Mucosa of descending colon (tissue), 3 donors: ENCODE measurements at regions of chr10 and their contacts with region 1.

Region 1: DNA sequence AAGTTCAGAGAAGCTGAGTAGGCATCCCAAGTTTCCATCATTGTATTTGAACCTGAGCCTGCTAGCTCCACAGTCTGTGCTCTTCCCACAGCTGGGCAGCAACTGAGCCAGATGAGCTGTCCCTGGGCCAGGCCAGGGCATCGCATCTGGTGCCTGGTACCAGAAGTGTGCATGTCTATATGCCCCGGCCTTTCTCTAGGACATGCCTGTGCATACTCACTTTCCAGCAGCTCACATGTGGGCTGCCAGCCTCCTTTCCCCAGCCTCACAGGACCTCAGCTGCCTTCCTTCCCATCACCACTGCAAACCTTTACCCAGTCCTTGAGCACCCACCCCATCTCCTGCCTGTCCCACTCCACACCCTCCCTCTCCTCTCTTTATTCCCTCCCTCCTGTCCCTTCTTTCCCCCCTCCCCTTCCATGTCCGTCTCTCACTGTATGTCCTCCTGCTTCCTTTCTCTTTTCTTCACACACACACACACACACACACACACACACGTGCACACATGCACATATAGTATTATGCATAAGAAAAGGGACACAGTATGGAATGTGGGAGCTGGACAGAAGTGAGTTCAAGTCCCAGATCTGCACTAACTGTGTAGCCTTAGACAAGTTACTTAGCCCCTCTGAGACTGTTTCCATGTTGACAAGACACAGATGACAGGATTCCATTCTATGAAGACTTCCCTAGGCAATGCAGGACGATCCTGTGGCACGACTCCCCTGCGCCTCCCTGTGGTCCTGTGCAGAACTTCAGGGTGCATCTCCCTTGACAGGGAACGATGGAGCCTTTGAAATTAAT is 10.9 kb downstream of the CDHR1 start:
- DNase-seq: peak; percentile 73 to 88 (median 86)
- ATAC-seq: peak; percentile 70
- H3K4me3 ChIP-seq: no peak overlapping the region
- H3K4me1 ChIP-seq: peaks cover 14% of the 10 kb centered on the region
- CTCF ChIP-seq: peak; percentile 62

Region 2: DNA sequence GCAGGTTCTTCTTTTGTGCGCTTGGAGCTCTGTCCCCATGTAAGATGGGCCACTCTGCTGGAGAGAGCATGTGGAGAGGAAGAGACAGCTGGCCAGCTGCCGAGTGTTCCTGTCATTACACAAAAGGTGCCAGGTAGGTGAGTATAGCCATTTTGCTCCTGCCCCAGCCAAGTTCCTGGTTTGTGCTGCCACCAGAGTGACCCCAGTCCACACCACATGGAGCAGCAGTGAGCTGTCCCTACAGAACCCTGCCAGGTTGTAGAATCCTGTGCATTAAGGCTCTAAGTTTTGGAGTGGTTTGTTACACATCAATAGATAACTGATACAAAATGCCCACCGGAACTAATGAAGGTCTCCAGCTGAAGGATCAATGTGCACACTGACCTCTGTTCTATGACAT is 150.5 kb before region 1 on chr10:
- intact Hi-C with region 1: no loop called
- DNase-seq: no peak
- ATAC-seq: peak; percentile 44
- H3K4me3 ChIP-seq: no peak overlapping the region
- H3K4me1 ChIP-seq: no peaks in the 10 kb centered on the region
- CTCF ChIP-seq: no peak

Region 3: DNA sequence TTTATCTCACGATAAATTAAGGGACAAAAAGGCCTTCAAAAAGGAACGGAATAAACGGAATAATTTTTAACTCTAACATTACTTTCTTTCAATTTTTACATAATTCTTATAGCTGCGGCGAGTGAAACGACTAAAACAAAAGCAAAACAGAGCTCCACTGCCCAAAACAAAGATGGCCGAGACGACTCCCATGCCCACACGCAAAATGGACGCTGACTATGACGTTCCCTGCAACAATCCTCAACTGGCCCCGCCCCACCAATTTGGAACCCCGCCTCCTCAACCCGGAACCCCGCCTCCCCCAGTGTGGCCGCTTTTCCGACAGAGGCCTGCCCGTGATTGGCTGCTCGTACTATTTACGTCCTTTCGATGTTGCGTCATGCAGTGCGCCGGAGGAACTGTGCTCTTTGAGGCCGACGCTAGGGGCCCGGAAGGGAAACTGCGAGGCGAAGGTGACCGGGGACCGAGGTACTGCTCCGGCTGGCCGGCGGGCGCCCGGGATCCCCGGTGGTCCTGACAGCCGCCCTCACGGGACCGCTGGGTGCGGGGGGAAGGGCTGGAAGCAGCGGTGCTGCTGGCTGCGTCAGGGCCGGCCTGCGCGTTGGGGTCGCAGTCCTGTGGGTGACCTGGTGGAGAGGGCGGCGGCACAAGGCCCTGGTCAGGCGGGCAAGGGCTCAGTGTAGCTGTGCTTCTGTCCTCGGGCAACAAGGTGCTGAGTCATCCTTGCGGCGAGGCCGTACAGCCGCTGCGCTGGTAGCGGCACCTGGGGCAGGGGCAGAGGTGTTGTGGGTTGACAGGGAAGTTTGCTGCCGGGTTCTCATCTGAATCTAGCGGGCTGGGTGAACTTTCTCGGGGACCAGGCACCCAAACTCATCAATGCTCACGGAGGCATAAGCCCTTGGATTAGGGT is 65.9 kb before region 1 on chr10 and contains the start of gene GHITM:
- intact Hi-C with region 1: loop called in 1 of 2 experiments (anchors 10 kb)
- DNase-seq: peak; percentile 99 to 100 (median 100)
- ATAC-seq: peak; percentile 95
- H3K4me3 ChIP-seq: peak within 1 kb of the TSS; percentile 96
- H3K4me1 ChIP-seq: peaks cover 29% of the 10 kb centered on the region
- CTCF ChIP-seq: peak; percentile 40
- total RNA-seq, gene GHITM: 216 to 279 (median 271) TPM

Region 4: DNA sequence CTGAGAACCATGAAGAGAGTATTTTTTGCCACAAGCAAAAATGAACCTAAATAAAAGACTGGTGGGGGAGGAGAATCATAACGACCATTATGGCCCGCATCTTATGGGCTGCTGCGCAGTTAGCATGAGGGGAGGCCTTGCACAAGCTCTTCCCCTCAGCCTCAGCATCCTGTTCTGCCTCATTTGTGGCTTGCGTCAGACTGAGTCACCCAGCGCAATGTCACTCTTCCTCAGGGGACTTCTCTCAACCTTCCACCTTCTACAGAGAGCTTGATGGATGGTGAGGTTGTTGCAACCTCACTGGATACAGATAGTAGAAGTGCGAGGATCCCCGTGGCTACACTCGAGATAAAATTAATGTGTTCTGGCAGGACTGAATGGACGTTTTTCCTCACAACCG is 48.5 kb before region 1 on chr10:
- intact Hi-C with region 1: loop called in 1 of 2 experiments (anchors 10 kb)
- DNase-seq: no peak
- ATAC-seq: peak; percentile 47
- H3K4me3 ChIP-seq: no peak overlapping the region
- H3K4me1 ChIP-seq: no peaks in the 10 kb centered on the region
- CTCF ChIP-seq: no peak